ENCODE measurements at regions of chr13 and their contacts with region 1.

Region 1: GRCh38 chr13:40777166-40777808 is 6.3 kb upstream of the MRPS31 start:
- DNase-seq: peak in 3 of 5 donors; percentile 59 to 75 (median 65)
- H3K4me3 ChIP-seq: peak overlapping the region; percentile 40 to 52
- H3K4me3 Mint-ChIP-seq: peak overlapping the region; percentile 77 to 92 (median 89)
- H3K27ac ChIP-seq: peak overlapping the region; percentile 72
- H3K27ac Mint-ChIP-seq: peak overlapping the region; percentile 93 to 100 (median 99)
- H3K4me1 ChIP-seq: peaks cover 30% of the 10 kb centered on the region
- H3K4me1 Mint-ChIP-seq: peaks cover 19 to 34% (median 22%) of the 10 kb centered on the region in 4 donors
- H3K27me3 ChIP-seq: no peaks in the 10 kb centered on the region
- H3K27me3 Mint-ChIP-seq: no peaks in the 10 kb centered on the region

Region 2: GRCh38 chr13:39684531-39685137 is 1092.7 kb before region 1 on chr13:
- CTCF ChIA-PET with region 1: interaction called, 28 read pairs
- POLR2A ChIA-PET with region 1: no interaction called
- intact Hi-C with region 1: loop called (anchors 1 kb)
- DNase-seq: peak in 4 of 5 donors; percentile 26 to 41 (median 29)
- H3K4me3 ChIP-seq: no peak overlapping the region
- H3K4me3 Mint-ChIP-seq: no peak overlapping the region
- H3K27ac ChIP-seq: no peak overlapping the region
- H3K27ac Mint-ChIP-seq: no peak overlapping the region
- H3K4me1 ChIP-seq: no peaks in the 10 kb centered on the region
- H3K4me1 Mint-ChIP-seq: peaks cover 0 to 16% (median 6%) of the 10 kb centered on the region in 4 donors
- H3K27me3 ChIP-seq: no peaks in the 10 kb centered on the region
- H3K27me3 Mint-ChIP-seq: no peaks in the 10 kb centered on the region

Region 3: DNA sequence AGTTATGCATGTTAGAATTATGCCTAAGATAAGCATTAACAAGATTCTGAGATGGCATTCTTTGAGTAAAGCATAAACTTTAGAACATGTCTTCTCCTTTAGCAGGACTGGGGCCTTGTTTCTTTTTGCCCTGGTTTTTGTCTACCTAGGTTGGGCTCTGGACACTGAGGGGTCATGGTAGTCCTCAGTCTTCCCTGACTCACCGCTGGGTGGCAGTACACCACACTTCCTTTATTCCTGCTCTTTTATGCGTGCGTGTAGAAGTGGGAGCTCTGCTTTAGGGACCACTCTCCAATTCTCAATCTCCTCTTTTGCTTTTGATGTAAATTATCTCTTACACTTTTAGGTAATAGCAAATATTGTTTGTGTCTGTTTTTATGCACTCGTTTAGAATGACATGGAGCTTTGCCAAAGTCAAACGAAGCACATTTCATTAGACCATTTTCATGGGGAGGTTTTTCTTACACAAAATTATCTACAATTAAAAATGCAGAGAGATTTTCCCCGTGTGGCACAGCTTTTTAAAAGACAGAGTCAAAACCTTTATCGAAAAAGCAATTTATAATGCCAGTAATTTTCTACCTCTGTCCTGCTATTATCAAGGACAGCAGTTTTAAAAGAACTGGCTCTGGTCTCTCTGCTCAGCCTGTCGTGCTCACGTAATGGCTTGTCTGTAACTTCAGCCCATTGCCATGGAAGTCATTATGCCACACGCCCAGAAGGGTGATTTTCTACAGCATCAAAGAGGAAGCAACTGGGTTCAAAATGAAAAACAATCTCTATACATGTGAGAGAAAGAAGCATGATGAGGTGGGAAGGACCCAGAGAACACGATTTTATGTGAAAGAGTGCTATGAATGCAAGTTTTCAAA is 707.9 kb before region 1 on chr13:
- CTCF ChIA-PET with region 1: interaction called, 9 read pairs
- POLR2A ChIA-PET with region 1: interaction called, 4 read pairs
- intact Hi-C with region 1: loop called (anchors 1 kb)
- DNase-seq: peak; percentile 53 to 71 (median 66)
- H3K4me3 ChIP-seq: no peak overlapping the region
- H3K4me3 Mint-ChIP-seq: peak overlapping the region in 6 of 8 donors; percentile 27 to 67 (median 40)
- H3K27ac ChIP-seq: no peak overlapping the region
- H3K27ac Mint-ChIP-seq: peak overlapping the region in 6 of 7 donors; percentile 6 to 87 (median 72)
- H3K4me1 ChIP-seq: peaks cover 19% of the 10 kb centered on the region
- H3K4me1 Mint-ChIP-seq: peaks cover 11 to 24% (median 16%) of the 10 kb centered on the region in 4 donors
- H3K27me3 ChIP-seq: no peaks in the 10 kb centered on the region
- H3K27me3 Mint-ChIP-seq: no peaks in the 10 kb centered on the region

Region 4: DNA sequence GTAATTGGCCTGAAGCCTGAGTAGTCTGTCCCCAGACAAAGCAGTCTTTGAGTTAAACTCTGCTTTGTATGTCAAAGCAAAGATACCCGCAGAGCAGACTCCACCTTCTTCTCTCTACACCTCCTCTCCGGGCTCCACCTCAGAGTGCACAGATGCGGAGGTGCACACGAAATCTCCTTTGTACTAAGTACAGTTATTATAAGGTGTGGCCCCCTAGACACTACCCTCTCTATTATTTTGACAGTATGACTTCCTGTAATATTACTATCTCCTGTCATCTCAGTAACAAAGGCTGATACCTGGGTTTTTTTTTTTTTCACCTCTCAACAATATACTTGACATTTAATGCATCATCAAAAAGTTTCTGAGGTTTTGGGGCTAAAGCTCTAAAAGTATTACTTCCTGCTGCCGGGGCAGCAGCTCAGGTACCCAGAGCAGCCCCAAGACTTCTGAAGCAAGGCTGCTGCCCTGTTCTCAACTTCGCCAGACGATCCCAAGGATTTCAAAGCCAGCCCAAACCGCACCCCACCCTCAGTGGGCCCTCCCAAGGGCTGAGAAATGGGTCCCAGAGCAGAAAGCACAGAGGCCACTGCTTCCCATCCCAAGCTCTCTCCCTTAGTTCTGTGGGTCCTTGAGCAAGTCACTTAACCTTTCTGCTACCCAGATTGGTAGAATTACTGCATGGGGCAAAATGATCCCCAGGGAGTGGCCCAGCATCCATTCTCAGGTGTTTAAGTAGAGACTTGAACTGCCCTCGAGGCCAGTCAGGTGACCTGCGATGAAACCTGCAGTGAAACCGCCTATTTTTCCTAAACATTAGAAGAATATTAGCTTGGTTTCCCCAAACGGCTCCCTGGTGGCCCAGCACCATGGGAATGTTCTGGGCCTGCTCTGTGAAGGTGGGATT is 291.4 kb before region 1 on chr13:
- CTCF ChIA-PET with region 1: interaction called, 3 read pairs
- POLR2A ChIA-PET with region 1: no interaction called
- intact Hi-C with region 1: loop called (anchors 5 kb)
- DNase-seq: peak; percentile 81 to 92 (median 91)
- H3K4me3 ChIP-seq: peak overlapping the region; percentile 0 to 29
- H3K4me3 Mint-ChIP-seq: peak overlapping the region; percentile 59 to 93 (median 82)
- H3K27ac ChIP-seq: peak overlapping the region; percentile 68
- H3K27ac Mint-ChIP-seq: peak overlapping the region; percentile 89 to 99 (median 98)
- H3K4me1 ChIP-seq: peaks cover 87% of the 10 kb centered on the region
- H3K4me1 Mint-ChIP-seq: peaks cover 53 to 96% (median 85%) of the 10 kb centered on the region in 4 donors
- H3K27me3 ChIP-seq: no peaks in the 10 kb centered on the region
- H3K27me3 Mint-ChIP-seq: no peaks in the 10 kb centered on the region

Region 5: GRCh38 chr13:40813661-40814454 is 36.6 kb after region 1 on chr13:
- CTCF ChIA-PET with region 1: interaction called, 17 read pairs
- POLR2A ChIA-PET with region 1: no interaction called
- intact Hi-C with region 1: no loop called
- DNase-seq: peak in 3 of 5 donors; percentile 5 to 20 (median 10)
- H3K4me3 ChIP-seq: no peak overlapping the region
- H3K4me3 Mint-ChIP-seq: no peak overlapping the region
- H3K27ac ChIP-seq: no peak overlapping the region
- H3K27ac Mint-ChIP-seq: peak overlapping the region in 1 of 7 donors; percentile 47
- H3K4me1 ChIP-seq: no peaks in the 10 kb centered on the region
- H3K4me1 Mint-ChIP-seq: peaks cover 0 to 3% (median 0%) of the 10 kb centered on the region in 4 donors
- H3K27me3 ChIP-seq: no peaks in the 10 kb centered on the region
- H3K27me3 Mint-ChIP-seq: no peaks in the 10 kb centered on the region

Region 6: DNA sequence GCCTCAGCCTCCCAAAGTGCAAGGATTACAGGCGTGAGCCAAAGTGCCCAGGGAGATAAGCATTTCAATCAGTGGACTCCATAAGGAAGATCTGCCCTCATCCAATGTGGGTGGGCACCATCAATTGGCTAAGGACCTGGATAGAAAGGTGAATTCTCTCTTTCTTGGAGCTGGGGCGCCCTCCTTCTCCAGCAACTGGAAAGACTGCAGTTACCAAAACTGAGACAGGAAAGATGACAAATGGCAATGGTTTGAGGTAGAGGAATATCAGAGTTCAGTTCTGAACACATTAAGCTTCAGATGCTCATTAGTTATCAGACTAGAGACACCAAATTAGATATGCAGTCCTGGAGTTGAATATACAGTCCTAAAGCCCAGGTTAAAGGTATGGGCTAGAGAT is 252.3 kb after region 1 on chr13:
- CTCF ChIA-PET with region 1: no interaction called
- POLR2A ChIA-PET with region 1: no interaction called
- intact Hi-C with region 1: loop called (anchors 1 kb)
- DNase-seq: peak in 1 of 5 donors; percentile 16
- H3K4me3 ChIP-seq: no peak overlapping the region
- H3K4me3 Mint-ChIP-seq: no peak overlapping the region
- H3K27ac ChIP-seq: no peak overlapping the region
- H3K27ac Mint-ChIP-seq: no peak overlapping the region
- H3K4me1 ChIP-seq: peaks cover 5% of the 10 kb centered on the region
- H3K4me1 Mint-ChIP-seq: peaks cover 10 to 18% (median 14%) of the 10 kb centered on the region in 4 donors
- H3K27me3 ChIP-seq: no peaks in the 10 kb centered on the region
- H3K27me3 Mint-ChIP-seq: no peaks in the 10 kb centered on the region